ENCODE measurements at regions of chr3 and their contacts with region 1.

Region 1: GRCh38 chr3:72270072-72270681 is 485.2 kb upstream of the PROK2 start:
- DNase-seq: peak; percentile 95 to 97
- H3K4me3 ChIP-seq: no peak overlapping the region
- H3K27ac ChIP-seq: peak overlapping the region in 1 of 2 donors; percentile 47
- H3K4me1 ChIP-seq: peaks cover 0 to 36% (median 31%) of the 10 kb centered on the region in 4 donors
- H3K27me3 ChIP-seq: no peaks in the 10 kb centered on the region
- CTCF ChIP-seq: no peak

Region 2: GRCh38 chr3:72092778-72093177 is 177.4 kb before region 1 on chr3:
- intact Hi-C with region 1: loop called (anchors 10 kb)
- DNase-seq: no peak
- H3K4me3 ChIP-seq: no peak overlapping the region
- H3K27ac ChIP-seq: no peak overlapping the region
- H3K4me1 ChIP-seq: peaks cover 0 to 11% (median 7%) of the 10 kb centered on the region in 4 donors
- H3K27me3 ChIP-seq: no peaks in the 10 kb centered on the region
- CTCF ChIP-seq: no peak

Measured in tibial artery (tissue), 4 donors.